ENCODE measurements at regions of chr6 and their contacts with region 1.

Region 1: GRCh38 chr6:20366091-20366832 is 35.4 kb upstream of the E2F3 start:
- DNase-seq: peak; percentile 37 to 48 (median 44)
- H3K4me3 ChIP-seq: peak overlapping the region; percentile 6 to 21
- H3K4me3 Mint-ChIP-seq: peak overlapping the region; percentile 64 to 91 (median 82)
- H3K27ac ChIP-seq: peak overlapping the region; percentile 42
- H3K27ac Mint-ChIP-seq: peak overlapping the region; percentile 86 to 97 (median 92)
- H3K4me1 ChIP-seq: peaks cover 61% of the 10 kb centered on the region
- H3K4me1 Mint-ChIP-seq: peaks cover 47 to 67% (median 57%) of the 10 kb centered on the region in 4 donors
- H3K27me3 ChIP-seq: no peaks in the 10 kb centered on the region
- H3K27me3 Mint-ChIP-seq: no peaks in the 10 kb centered on the region

Region 2: DNA sequence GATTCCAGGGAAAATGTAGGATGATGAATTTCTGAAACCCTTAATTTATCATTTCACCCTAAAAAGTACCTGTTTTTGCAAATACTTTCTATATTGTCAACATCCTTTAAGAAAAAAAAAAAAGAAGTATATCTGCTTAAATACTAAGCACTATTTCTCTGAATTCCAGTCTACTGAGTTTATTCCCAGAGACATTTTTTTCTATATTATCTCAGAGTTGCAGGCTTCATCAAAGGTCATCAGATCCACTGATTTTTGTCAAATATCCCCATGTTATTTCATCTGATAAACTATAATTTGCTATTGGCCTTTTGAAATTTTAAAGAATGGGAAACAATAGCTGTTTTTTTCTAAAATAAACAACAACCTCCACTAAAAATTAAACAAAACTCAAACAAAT is 886.7 kb before region 1 on chr6:
- CTCF ChIA-PET with region 1: no interaction called
- POLR2A ChIA-PET with region 1: no interaction called
- intact Hi-C with region 1: no loop called
- DNase-seq: no peak
- H3K4me3 ChIP-seq: no peak overlapping the region
- H3K4me3 Mint-ChIP-seq: no peak overlapping the region
- H3K27ac ChIP-seq: no peak overlapping the region
- H3K27ac Mint-ChIP-seq: no peak overlapping the region
- H3K4me1 ChIP-seq: no peaks in the 10 kb centered on the region
- H3K4me1 Mint-ChIP-seq: no peaks in the 10 kb centered on the region
- H3K27me3 ChIP-seq: no peaks in the 10 kb centered on the region
- H3K27me3 Mint-ChIP-seq: no peaks in the 10 kb centered on the region

Region 3: GRCh38 chr6:20291764-20292580 is 74.3 kb before region 1 on chr6:
- CTCF ChIA-PET with region 1: interaction called, 6 read pairs
- POLR2A ChIA-PET with region 1: interaction called, 6 read pairs
- intact Hi-C with region 1: loop called (anchors 1 kb)
- DNase-seq: peak; percentile 55 to 68 (median 61)
- H3K4me3 ChIP-seq: no peak overlapping the region
- H3K4me3 Mint-ChIP-seq: peak overlapping the region in 7 of 8 donors; percentile 4 to 65 (median 34)
- H3K27ac ChIP-seq: no peak overlapping the region
- H3K27ac Mint-ChIP-seq: peak overlapping the region in 4 of 7 donors; percentile 8 to 63 (median 47)
- H3K4me1 ChIP-seq: peaks cover 13% of the 10 kb centered on the region
- H3K4me1 Mint-ChIP-seq: peaks cover 8 to 29% (median 14%) of the 10 kb centered on the region in 4 donors
- H3K27me3 ChIP-seq: no peaks in the 10 kb centered on the region
- H3K27me3 Mint-ChIP-seq: no peaks in the 10 kb centered on the region

Region 4: DNA sequence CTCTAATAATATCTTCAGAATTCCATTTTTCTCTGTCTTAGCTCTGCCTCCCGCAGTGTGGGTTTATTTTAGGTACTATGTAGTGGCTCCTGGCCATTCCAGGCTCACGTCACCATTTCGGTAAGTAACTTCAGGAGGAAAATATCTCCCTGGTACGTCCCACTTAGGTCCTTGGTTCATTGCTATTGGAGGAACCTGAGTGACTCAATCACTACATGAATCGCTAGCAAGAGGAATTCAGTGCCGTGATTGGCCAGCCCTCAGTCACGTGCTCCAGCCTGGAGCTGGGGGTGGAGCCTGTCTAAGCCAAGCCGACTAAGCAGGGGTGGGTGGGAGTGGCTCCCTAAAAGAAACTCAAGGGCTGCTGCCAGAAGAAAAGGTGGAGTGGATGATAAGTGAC is 31.9 kb before region 1 on chr6:
- CTCF ChIA-PET with region 1: interaction called, 31 read pairs
- POLR2A ChIA-PET with region 1: interaction called, 76 read pairs
- intact Hi-C with region 1: no loop called
- DNase-seq: no peak
- H3K4me3 ChIP-seq: no peak overlapping the region
- H3K4me3 Mint-ChIP-seq: no peak overlapping the region
- H3K27ac ChIP-seq: no peak overlapping the region
- H3K27ac Mint-ChIP-seq: no peak overlapping the region
- H3K4me1 ChIP-seq: peaks cover 21% of the 10 kb centered on the region
- H3K4me1 Mint-ChIP-seq: peaks cover 17 to 22% (median 19%) of the 10 kb centered on the region in 4 donors
- H3K27me3 ChIP-seq: no peaks in the 10 kb centered on the region
- H3K27me3 Mint-ChIP-seq: no peaks in the 10 kb centered on the region

Region 5: GRCh38 chr6:20340068-20340848 is 26.0 kb before region 1 on chr6:
- CTCF ChIA-PET with region 1: interaction called, 31 read pairs
- POLR2A ChIA-PET with region 1: interaction called, 76 read pairs
- intact Hi-C with region 1: no loop called
- DNase-seq: no peak
- H3K4me3 ChIP-seq: no peak overlapping the region
- H3K4me3 Mint-ChIP-seq: no peak overlapping the region
- H3K27ac ChIP-seq: no peak overlapping the region
- H3K27ac Mint-ChIP-seq: no peak overlapping the region
- H3K4me1 ChIP-seq: peaks cover 17% of the 10 kb centered on the region
- H3K4me1 Mint-ChIP-seq: peaks cover 12 to 23% (median 17%) of the 10 kb centered on the region in 4 donors
- H3K27me3 ChIP-seq: no peaks in the 10 kb centered on the region
- H3K27me3 Mint-ChIP-seq: no peaks in the 10 kb centered on the region

Region 6: DNA sequence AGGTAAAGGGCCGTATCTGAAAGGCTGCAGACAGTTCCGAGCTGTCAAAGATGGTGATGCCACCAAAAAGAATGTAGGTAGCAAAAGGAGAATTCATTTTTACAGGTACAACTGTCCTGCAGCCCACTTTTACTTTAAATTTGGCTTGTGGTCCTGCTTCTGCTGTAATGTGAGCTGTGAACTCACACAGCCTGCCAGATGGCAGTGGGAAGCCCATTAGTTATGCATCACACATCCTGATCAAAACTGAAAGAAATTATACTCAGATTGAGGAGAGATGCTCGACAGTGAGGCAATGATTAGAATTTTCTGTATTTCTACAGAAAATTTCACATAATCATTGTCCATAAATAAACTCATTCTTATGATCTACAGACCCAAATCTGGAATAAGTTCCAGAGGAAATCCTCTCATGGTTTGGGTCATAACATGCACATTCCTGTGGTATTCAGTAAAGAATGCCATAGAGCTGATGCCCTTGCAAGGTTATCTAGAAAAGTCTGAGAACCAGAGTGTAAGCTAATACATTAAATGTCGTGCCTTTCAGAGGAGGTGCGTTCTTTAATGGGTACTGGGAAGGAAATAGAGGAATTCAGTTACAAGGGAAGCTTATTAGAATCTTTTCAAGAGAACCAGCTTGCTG is 11.5 kb after region 1 on chr6:
- CTCF ChIA-PET with region 1: interaction called, 10 read pairs
- POLR2A ChIA-PET with region 1: interaction called, 51 read pairs
- intact Hi-C with region 1: no loop called
- DNase-seq: no peak
- H3K4me3 ChIP-seq: no peak overlapping the region
- H3K4me3 Mint-ChIP-seq: no peak overlapping the region
- H3K27ac ChIP-seq: no peak overlapping the region
- H3K27ac Mint-ChIP-seq: no peak overlapping the region
- H3K4me1 ChIP-seq: peaks cover 6% of the 10 kb centered on the region
- H3K4me1 Mint-ChIP-seq: peaks cover 7 to 10% (median 7%) of the 10 kb centered on the region in 4 donors
- H3K27me3 ChIP-seq: no peaks in the 10 kb centered on the region
- H3K27me3 Mint-ChIP-seq: no peaks in the 10 kb centered on the region

Region 7: GRCh38 chr6:21312118-21312517 is 945.9 kb after region 1 on chr6:
- CTCF ChIA-PET with region 1: no interaction called
- POLR2A ChIA-PET with region 1: no interaction called
- intact Hi-C with region 1: no loop called
- DNase-seq: no peak
- H3K4me3 ChIP-seq: no peak overlapping the region
- H3K4me3 Mint-ChIP-seq: no peak overlapping the region
- H3K27ac ChIP-seq: no peak overlapping the region
- H3K27ac Mint-ChIP-seq: no peak overlapping the region
- H3K4me1 ChIP-seq: no peaks in the 10 kb centered on the region
- H3K4me1 Mint-ChIP-seq: no peaks in the 10 kb centered on the region
- H3K27me3 ChIP-seq: no peaks in the 10 kb centered on the region
- H3K27me3 Mint-ChIP-seq: no peaks in the 10 kb centered on the region

Measured in CD4-positive, alpha-beta memory T cell (primary cell).